Activated naive CD8-positive, alpha-beta T cell treated with anti-CD3 and anti-CD28 coated beads, Interleukin-2, amount 10 ng/mL, durations not matched to agents 7 days and 5 days (primary cell): ENCODE measurements at regions of chr9 and their contacts with region 1.

Region 1: DNA sequence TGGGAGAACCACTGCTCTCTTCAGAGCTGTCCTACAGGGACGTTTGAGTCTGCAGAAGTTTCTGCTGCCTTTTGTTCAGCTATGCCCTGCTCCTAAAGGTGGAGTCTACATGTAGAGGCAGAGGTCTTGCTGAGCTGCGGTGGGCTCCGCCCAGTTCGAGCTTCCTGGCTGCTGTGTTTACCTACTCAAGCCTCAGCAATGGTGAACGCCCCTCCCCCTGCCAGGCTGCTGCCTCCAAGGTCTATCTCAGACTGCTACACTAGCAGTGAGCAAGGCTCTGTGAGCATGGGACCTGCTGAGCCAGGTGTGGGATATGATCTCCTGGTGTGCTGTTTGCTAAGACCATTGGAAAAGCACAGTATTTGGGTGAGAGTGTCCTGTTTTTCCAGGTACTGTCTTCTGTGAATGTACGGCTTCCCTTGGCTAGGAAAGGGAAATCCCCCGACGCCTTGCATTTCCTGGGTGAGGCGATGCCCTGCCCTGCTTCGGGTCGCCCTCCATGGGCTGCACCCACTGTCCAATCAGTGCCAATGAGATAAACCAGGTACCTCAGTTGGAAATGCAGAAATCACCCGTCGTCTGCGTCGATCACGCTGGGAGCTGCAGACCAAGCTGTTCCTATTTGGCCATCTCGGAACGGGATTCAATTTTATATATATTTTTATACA is 58.5 kb downstream of the CNTRL start:
- DNase-seq: peak; percentile 76
- ATAC-seq: peak; percentile 100
- H3K4me3 Mint-ChIP-seq: peak overlapping the region; percentile 50
- H3K27ac Mint-ChIP-seq: peak overlapping the region; percentile 88
- H3K4me1 Mint-ChIP-seq: peaks cover 44% of the 10 kb centered on the region
- H3K27me3 Mint-ChIP-seq: no peaks in the 10 kb centered on the region

Region 2: DNA sequence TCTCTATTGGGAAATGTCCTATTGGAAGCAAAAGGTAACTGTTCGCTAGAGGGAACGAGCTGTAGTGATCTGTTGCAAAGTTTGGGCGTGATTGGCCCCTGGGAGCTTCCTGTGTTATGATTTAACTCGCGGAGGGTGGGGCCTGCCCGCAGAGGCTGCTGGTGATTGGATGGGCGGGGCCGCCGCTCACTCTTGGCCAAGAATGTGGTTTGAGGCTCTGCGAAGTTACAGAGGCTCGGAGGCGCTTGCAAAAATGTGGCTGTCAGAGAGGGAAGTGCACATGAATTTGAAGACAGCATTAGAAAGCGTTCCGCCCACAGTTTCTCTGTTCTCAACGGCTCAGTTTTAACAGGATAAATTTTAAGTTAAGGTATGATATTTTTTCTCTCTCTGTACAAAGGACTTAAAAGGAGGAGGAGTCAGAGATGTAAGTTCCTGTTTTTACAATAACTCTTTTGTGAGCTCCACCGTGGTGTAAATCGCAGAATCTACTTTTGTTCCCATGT is 11.6 kb before region 1 on chr9:
- POLR2A ChIA-PET with region 1: interaction called, 25 read pairs
- DNase-seq: peak; percentile 94
- ATAC-seq: peak; percentile 97
- H3K4me3 Mint-ChIP-seq: peak overlapping the region; percentile 89
- H3K27ac Mint-ChIP-seq: peak overlapping the region; percentile 92
- H3K4me1 Mint-ChIP-seq: peaks cover 33% of the 10 kb centered on the region
- H3K27me3 Mint-ChIP-seq: no peaks in the 10 kb centered on the region